Activated naive CD4-positive, alpha-beta T cell treated with anti-CD3 and anti-CD28 coated beads for 36 hours (primary cell): ENCODE measurements at regions of chr11 and their contacts with region 1.

Region 1: DNA sequence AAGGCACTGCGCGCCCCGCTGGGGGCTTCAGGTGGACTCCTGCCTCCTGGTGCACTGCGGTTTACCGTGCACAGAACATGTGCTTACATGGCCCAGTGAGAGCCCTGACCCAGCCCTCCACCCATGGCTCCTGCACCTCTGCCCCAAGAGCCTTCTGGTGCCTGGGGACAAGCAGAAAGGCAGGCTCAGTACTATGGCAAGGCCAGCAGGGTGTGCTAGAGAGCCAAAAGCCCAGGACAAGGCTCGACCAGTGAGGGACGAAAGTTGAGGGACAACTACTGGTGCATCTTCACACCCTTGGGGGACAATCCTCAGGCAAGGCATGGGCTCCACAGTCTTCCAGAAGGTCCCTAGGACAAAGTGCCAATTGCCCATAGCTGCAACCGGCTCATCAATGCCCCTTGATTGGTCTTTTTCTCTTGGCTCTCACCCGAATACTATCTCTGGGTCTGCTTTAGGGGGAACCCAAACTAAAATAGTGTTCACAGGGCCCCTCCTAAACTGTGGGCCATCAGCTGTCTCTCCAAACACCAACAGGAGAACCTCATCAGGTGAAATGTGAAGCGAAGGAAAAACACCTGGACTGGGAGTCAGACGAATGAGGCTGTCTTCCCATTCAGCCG is 13.5 kb downstream of the PGA5 start:
- DNase-seq: peak; percentile 80
- H3K4me3 Mint-ChIP-seq: no peak overlapping the region
- H3K27ac Mint-ChIP-seq: no peak overlapping the region
- H3K4me1 Mint-ChIP-seq: no peaks in the 10 kb centered on the region
- H3K27me3 Mint-ChIP-seq: no peaks in the 10 kb centered on the region

Region 2: GRCh38 chr11:61266602-61267001 is 12.1 kb after region 1 on chr11:
- CTCF ChIA-PET with region 1: interaction called, 18 read pairs
- intact Hi-C with region 1: no loop called
- DNase-seq: no peak
- H3K4me3 Mint-ChIP-seq: no peak overlapping the region
- H3K27ac Mint-ChIP-seq: no peak overlapping the region
- H3K4me1 Mint-ChIP-seq: peaks cover 2% of the 10 kb centered on the region
- H3K27me3 Mint-ChIP-seq: no peaks in the 10 kb centered on the region

Region 3: DNA sequence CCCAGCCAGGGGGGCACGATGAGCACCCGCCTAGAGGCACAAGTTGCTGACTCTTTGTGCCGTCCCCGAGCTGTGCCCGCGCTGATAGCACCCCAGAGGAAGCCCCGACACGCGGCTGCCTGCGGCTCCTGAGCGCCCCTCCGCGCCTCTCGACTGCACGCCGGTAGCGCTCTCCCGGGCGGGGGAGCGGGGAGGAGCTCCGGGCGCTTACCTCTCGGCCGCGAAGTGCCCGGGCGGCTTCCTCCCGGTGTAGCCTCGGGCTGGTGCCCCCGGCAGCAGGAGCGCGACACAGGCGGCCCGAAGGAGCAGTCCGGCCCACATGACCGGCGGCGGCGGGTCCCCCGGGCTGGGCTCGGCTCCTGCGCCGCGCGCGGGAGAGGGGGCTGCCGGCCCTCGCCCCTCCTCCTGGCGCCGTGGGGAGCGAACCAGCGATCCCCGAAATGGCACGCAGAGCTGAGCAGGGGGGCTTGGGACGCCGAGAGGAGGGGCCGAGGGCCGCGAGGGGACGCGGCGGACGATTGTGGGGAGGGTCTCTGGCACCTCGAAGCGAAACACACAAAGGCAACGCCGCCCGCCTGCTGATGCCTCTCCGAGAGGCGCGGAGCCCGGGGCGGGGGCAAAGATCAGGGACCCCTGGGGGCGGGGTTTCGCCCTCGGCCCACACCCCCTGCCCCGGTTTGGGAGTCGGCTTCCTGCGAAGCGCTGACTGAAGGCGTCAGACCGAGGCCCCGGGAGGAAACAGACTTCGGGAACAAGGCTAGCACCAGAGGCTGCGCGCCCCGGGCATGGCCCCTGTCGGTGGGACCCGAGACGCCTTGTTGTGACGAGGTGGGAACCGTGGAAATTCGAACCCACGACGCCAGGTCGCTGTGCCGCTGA is 40.4 kb after region 1 on chr11 and contains the start of gene VWCE:
- CTCF ChIA-PET with region 1: interaction called, 4 read pairs
- intact Hi-C with region 1: loop called (anchors 1 kb)
- DNase-seq: peak; percentile 83
- H3K4me3 Mint-ChIP-seq: peak within 1 kb of the TSS; percentile 84
- H3K27ac Mint-ChIP-seq: peak within 1 kb of the TSS; percentile 41
- H3K4me1 Mint-ChIP-seq: peaks cover 34% of the 10 kb centered on the region
- H3K27me3 Mint-ChIP-seq: peaks cover 9% of the 10 kb centered on the region
- total RNA-seq, gene VWCE: 6.6 TPM

Region 4: GRCh38 chr11:61827571-61828378 is 573.3 kb after region 1 on chr11 and contains the start of gene FADS2:
- CTCF ChIA-PET with region 1: no interaction called
- intact Hi-C with region 1: no loop called
- DNase-seq: peak; percentile 90
- H3K4me3 Mint-ChIP-seq: peak within 1 kb of the TSS; percentile 85
- H3K27ac Mint-ChIP-seq: peak within 1 kb of the TSS; percentile 77
- H3K4me1 Mint-ChIP-seq: peaks cover 18% of the 10 kb centered on the region
- H3K27me3 Mint-ChIP-seq: peaks cover 40% of the 10 kb centered on the region
- total RNA-seq, gene FADS2: 32.1 to 34.1 TPM